ENCODE measurements at regions of chr17 and their contacts with region 1.

Region 1: GRCh38 chr17:74759243-74759801 is 10.9 kb downstream of the NHERF1 start:
- DNase-seq: peak in 7 of 9 experiments; percentile 47 to 85 (median 71)
- ATAC-seq: peak; percentile 83
- H3K4me3 ChIP-seq: peak overlapping the region; percentile 37 to 41
- H3K4me3 Mint-ChIP-seq: peak overlapping the region; percentile 81
- H3K27ac ChIP-seq: peak overlapping the region; percentile 38 to 62
- H3K27ac Mint-ChIP-seq: peak overlapping the region; percentile 90
- H3K4me1 ChIP-seq: peaks cover 84% of the 10 kb centered on the region
- H3K4me1 Mint-ChIP-seq: peaks cover 75% of the 10 kb centered on the region
- H3K27me3 ChIP-seq: no peaks in the 10 kb centered on the region
- H3K27me3 Mint-ChIP-seq: no peaks in the 10 kb centered on the region
- CTCF ChIP-seq: no peak

Region 2: GRCh38 chr17:74123350-74123749 is 636.0 kb before region 1 on chr17:
- CTCF ChIA-PET with region 1: no interaction called
- POLR2A ChIA-PET with region 1: no interaction called
- intact Hi-C with region 1: no loop called
- DNase-seq: no peak
- ATAC-seq: no peak
- H3K4me3 ChIP-seq: no peak overlapping the region
- H3K4me3 Mint-ChIP-seq: no peak overlapping the region
- H3K27ac ChIP-seq: no peak overlapping the region
- H3K27ac Mint-ChIP-seq: no peak overlapping the region
- H3K4me1 ChIP-seq: no peaks in the 10 kb centered on the region
- H3K4me1 Mint-ChIP-seq: no peaks in the 10 kb centered on the region
- H3K27me3 ChIP-seq: no peaks in the 10 kb centered on the region
- H3K27me3 Mint-ChIP-seq: peaks cover 30% of the 10 kb centered on the region
- CTCF ChIP-seq: no peak

Region 3: DNA sequence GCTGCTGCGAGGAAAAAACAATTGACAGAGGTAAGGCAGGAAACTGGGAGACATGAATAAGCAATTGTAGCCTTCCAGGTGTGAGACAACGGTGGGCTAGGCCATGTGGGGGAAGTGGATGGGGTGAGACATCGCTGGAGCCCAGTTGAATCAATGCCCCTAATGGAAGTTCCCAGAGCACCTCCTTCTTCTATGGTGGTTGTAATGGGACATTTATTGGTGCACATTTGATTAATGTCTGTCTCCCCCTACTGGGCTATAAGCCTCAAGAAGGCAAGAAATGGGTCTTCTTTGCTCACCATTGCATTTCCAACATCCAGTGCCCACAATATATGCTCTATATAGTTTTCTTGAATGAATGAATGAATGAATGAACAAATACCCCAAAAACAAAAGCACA is 113.1 kb before region 1 on chr17:
- CTCF ChIA-PET with region 1: no interaction called
- POLR2A ChIA-PET with region 1: no interaction called
- intact Hi-C with region 1: no loop called
- DNase-seq: peak in 2 of 9 experiments; percentile 26 to 48
- ATAC-seq: no peak
- H3K4me3 ChIP-seq: no peak overlapping the region
- H3K4me3 Mint-ChIP-seq: no peak overlapping the region
- H3K27ac ChIP-seq: no peak overlapping the region
- H3K27ac Mint-ChIP-seq: no peak overlapping the region
- H3K4me1 ChIP-seq: no peaks in the 10 kb centered on the region
- H3K4me1 Mint-ChIP-seq: no peaks in the 10 kb centered on the region
- H3K27me3 ChIP-seq: peaks cover 0 to 6% of the 10 kb centered on the region in 2 experiments
- H3K27me3 Mint-ChIP-seq: peaks cover 50% of the 10 kb centered on the region
- CTCF ChIP-seq: no peak

Region 4: DNA sequence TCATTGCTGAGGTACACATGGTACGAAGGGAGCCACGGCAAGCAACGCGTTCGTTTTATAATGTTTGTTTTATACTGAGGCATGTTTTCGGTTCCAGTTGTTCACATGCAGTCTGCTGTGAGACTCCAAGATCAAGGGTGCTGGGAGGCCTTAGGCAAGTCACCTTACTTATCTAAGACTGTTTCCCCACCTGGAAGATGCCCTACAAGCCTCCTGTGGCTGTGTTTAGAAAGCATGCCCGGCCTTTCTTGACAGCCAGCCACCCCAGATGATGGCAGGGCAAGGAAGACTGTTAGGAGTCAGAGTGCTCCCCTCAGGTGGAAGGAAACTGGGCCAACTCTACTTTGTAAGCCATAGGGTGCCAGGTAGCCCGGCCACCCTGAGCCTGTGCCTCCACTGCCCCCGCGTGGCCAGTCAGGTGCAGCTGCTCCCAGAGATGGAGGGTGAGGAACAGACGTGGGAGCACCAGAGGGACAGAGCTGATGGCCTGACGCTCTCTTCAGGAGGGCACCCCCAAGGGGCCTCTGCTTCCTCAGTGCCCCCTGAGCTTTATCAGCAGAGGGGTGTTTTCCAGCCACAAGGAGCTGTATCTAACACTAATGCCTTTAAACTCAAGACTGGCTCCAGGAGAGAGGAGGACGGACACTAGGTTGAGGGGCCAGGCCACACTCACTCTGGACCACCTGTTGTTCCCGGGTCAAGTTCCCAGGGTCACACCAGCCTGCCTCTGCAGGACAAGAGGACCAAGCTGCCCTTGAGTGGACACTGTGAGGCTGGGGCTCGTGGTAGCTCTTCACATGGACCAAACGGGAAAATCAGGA is 11.4 kb after region 1 on chr17:
- CTCF ChIA-PET with region 1: interaction called, 104 read pairs
- POLR2A ChIA-PET with region 1: interaction called, 24 read pairs
- intact Hi-C with region 1: loop called in 1 of 2 experiments (anchors 1 kb)
- DNase-seq: peak; percentile 62 to 88 (median 78)
- ATAC-seq: peak; percentile 95
- H3K4me3 ChIP-seq: no peak overlapping the region
- H3K4me3 Mint-ChIP-seq: no peak overlapping the region
- H3K27ac ChIP-seq: peak overlapping the region in 1 of 2 experiments; percentile 18
- H3K27ac Mint-ChIP-seq: peak overlapping the region; percentile 81
- H3K4me1 ChIP-seq: peaks cover 21% of the 10 kb centered on the region
- H3K4me1 Mint-ChIP-seq: peaks cover 36% of the 10 kb centered on the region
- H3K27me3 ChIP-seq: no peaks in the 10 kb centered on the region
- H3K27me3 Mint-ChIP-seq: no peaks in the 10 kb centered on the region
- CTCF ChIP-seq: peak; percentile 70

Region 5: DNA sequence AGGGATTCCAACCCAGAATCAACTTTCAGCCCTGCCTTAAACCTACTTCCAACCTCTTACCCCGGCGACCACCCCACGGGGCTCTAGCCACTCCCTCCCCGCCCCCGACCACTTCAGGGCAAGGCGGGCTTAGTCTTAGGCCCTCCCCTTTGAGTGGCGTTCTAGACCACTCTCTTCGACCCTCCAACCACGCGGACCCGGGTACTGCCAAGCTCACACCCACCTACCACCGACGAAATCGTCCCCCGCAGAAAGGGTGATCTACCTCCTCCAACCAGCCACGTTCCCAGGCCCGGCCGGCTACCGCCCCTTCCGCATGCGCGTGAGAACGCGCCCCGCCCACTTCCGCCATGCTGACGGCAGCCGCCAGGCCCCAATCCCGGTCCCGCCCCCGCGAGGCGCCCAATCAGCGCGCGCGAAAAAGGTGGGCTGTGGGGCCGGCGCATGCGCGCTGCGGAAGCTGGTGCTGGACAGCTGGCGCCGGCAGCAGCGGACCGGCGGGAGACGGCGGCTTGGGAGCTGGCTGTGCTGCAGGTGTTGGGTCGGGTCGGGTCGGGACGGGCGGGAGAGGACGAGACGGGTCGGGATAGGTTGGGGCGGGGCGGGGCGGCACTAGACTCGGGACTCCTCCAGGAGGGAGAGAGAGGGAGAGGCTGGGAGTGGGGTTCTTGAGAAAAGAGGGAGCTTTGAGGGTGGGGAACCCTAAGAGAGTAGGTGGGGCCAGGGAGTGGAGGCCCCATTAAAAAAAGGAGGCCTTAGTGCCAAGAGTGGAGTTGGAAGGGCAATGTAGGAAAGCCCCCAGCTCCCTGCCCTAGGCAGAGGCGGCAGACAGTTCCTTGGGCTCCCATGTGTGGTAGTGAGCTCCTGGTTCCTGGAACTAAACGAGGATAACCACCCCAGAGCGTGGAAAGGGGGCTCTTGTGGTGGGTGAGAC is 17.0 kb after region 1 on chr17 and contains the start of gene NAT9:
- CTCF ChIA-PET with region 1: interaction called, 104 read pairs
- POLR2A ChIA-PET with region 1: interaction called, 24 read pairs
- intact Hi-C with region 1: no loop called
- DNase-seq: peak; percentile 97 to 100 (median 99)
- ATAC-seq: peak; percentile 74
- H3K4me3 ChIP-seq: peak within 1 kb of the TSS; percentile 68 to 83
- H3K4me3 Mint-ChIP-seq: peak within 1 kb of the TSS; percentile 99
- H3K27ac ChIP-seq: peak within 1 kb of the TSS; percentile 56 to 76
- H3K27ac Mint-ChIP-seq: peak within 1 kb of the TSS; percentile 97
- H3K4me1 ChIP-seq: peaks cover 47% of the 10 kb centered on the region
- H3K4me1 Mint-ChIP-seq: peaks cover 62% of the 10 kb centered on the region
- H3K27me3 ChIP-seq: no peaks in the 10 kb centered on the region
- H3K27me3 Mint-ChIP-seq: no peaks in the 10 kb centered on the region
- CTCF ChIP-seq: no peak
- total RNA-seq, gene NAT9: 37.9 to 41.1 TPM

Region 6: DNA sequence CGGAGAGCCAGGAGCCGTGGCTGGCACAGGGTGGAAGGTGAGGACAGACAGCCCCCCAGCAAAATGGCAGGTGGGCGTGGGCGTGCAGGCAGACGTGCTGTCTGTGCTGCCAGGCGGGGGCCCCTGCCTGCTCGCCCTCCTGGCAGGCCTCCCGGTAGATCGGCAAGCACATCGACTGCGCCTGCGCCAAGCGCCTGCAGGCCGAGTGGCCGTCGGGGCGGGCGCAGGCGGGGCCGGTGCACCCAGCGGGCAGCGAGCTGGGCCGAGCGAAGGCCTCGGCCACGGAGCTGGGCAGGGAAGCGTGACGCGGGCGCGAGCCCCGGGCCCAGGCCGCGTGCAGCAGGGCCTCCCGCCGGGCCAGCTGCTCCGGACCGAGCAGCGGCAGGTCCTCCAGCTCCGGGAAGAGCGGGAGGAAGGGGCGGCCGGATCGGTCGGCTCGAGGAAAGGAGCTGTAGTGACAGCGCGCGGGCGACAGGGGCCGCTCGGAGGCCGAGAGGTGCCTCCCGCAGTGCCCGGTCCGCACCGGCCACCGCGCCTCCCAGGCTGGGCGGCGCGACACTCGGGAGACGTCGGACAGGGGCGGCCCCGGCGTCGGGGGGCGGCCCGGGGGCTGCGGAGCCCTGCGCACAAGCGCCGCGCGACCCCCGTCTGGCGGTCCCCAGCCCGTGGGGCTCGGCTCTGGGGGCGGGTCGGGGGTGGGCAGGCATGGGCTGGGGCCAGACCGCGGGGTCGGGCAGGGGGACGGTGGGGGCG is 83.5 kb after region 1 on chr17:
- CTCF ChIA-PET with region 1: no interaction called
- POLR2A ChIA-PET with region 1: no interaction called
- intact Hi-C with region 1: no loop called
- DNase-seq: peak in 2 of 9 experiments; percentile 22 to 31
- ATAC-seq: peak; percentile 34
- H3K4me3 ChIP-seq: no peak overlapping the region
- H3K4me3 Mint-ChIP-seq: no peak overlapping the region
- H3K27ac ChIP-seq: no peak overlapping the region
- H3K27ac Mint-ChIP-seq: no peak overlapping the region
- H3K4me1 ChIP-seq: no peaks in the 10 kb centered on the region
- H3K4me1 Mint-ChIP-seq: peaks cover 19% of the 10 kb centered on the region
- H3K27me3 ChIP-seq: peaks cover 0 to 6% of the 10 kb centered on the region in 2 experiments
- H3K27me3 Mint-ChIP-seq: peaks cover 11% of the 10 kb centered on the region
- CTCF ChIP-seq: peak; percentile 20